ENCODE measurements at regions of chr5 and their contacts with region 1.

Region 1: DNA sequence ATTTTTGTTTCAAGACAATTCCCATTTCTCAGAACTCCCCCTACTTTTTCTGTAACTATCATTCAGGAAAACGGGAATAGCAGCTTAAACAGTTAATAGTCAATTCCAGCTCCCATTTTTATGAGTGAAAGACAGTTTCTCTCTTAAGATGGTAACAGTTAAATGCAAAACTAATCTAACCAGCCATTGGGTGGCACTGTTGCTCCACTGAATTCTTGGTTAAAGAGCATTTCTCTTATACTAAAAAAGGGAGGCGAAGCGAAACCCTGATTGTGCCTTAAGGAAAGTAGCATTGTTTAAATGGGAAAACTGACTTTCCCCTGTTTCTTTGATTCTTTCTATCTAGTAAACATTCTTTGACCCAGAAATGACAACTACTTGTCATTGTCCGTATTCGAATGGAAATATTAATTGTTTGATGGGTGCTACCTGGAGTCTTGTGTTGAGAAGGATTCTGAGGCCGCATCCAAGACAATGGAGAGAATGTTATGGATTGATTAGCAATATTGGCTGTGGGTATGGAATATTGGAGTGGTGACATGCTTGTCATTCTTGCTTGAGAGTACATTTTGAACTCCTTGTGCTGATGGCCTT is 507.8 kb downstream of the MAT2B start:
- DNase-seq: peak; percentile 57 to 68
- H3K4me3 ChIP-seq: no peak overlapping the region
- H3K4me3 Mint-ChIP-seq: no peak overlapping the region
- H3K27ac Mint-ChIP-seq: no peak overlapping the region
- H3K4me1 ChIP-seq: no peaks in the 10 kb centered on the region
- H3K4me1 Mint-ChIP-seq: no peaks in the 10 kb centered on the region
- H3K27me3 ChIP-seq: no peaks in the 10 kb centered on the region
- H3K27me3 Mint-ChIP-seq: peaks cover 3% of the 10 kb centered on the region
- CTCF ChIP-seq: peak; percentile 63 to 69

Region 2: DNA sequence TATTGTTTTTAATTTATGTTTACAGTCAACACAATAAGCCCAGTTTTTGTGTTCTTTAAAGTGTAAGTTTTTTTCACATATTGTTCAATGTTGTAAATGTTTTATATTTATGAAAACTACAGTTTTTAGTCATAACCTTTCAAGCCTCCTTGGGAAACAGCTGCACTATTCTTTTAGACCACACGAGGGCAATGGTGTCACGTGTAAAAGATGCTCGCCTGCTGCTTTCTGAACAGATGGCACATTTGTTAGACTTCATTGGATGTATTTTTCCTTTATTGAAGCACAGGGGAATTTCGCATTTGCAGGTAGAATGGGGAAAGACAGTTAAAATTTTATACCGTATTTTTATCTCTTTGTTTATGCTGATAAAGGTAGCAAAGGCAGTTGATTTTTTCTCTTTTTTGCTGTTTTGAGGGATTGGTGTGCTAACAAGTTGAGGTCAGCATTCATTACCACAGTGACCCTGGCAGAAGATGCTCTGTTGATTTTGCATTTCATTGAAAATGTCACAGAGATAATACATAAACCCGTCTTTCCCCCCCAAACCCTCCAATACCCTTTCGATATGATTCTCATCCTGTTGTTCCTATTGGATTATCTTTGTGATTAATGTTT is 448.7 kb before region 1 on chr5:
- CTCF ChIA-PET with region 1: interaction called, 4 read pairs
- POLR2A ChIA-PET with region 1: no interaction called
- intact Hi-C with region 1: loop called (anchors 2 kb)
- DNase-seq: peak; percentile 48 to 69
- H3K4me3 ChIP-seq: no peak overlapping the region
- H3K4me3 Mint-ChIP-seq: no peak overlapping the region
- H3K27ac Mint-ChIP-seq: no peak overlapping the region
- H3K4me1 ChIP-seq: 0 out of 2 replicates have a peak, but pooled peaks cover 3% of the 10 kb centered on the region
- H3K4me1 Mint-ChIP-seq: peaks cover 8% of the 10 kb centered on the region
- H3K27me3 ChIP-seq: peaks cover 2% of the 10 kb centered on the region; the same call in 1 of the 2 replicates
- H3K27me3 Mint-ChIP-seq: peaks cover 20% of the 10 kb centered on the region
- CTCF ChIP-seq: peak; percentile 82 to 85

Region 3: DNA sequence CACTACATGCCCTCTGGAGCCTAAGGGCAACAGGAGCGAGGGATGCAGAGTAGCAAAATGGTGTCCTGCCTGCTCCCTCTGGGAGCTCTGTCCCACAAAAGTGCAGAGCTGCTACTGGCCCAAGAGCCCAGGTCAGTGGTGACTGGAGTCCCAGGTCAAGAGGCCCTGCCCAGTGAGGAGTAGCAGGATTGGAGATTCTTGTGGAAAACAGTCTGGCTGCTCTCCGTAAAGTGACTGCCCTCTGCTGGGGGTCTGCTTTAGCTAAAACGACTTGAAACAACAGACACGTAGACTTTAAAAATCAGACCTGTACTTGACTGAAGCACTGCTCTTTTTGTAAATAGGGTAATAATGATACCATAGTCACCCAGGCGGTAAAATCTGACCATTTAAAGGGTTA is 409.2 kb after region 1 on chr5:
- CTCF ChIA-PET with region 1: no interaction called
- POLR2A ChIA-PET with region 1: no interaction called
- intact Hi-C with region 1: loop called (anchors 1 kb)
- DNase-seq: peak; percentile 43 to 58
- H3K4me3 ChIP-seq: no peak overlapping the region
- H3K4me3 Mint-ChIP-seq: no peak overlapping the region
- H3K27ac Mint-ChIP-seq: no peak overlapping the region
- H3K4me1 ChIP-seq: no peaks in the 10 kb centered on the region
- H3K4me1 Mint-ChIP-seq: no peaks in the 10 kb centered on the region
- H3K27me3 ChIP-seq: no peaks in the 10 kb centered on the region
- H3K27me3 Mint-ChIP-seq: no peaks in the 10 kb centered on the region
- CTCF ChIP-seq: peak; percentile 31 to 60

Region 4: DNA sequence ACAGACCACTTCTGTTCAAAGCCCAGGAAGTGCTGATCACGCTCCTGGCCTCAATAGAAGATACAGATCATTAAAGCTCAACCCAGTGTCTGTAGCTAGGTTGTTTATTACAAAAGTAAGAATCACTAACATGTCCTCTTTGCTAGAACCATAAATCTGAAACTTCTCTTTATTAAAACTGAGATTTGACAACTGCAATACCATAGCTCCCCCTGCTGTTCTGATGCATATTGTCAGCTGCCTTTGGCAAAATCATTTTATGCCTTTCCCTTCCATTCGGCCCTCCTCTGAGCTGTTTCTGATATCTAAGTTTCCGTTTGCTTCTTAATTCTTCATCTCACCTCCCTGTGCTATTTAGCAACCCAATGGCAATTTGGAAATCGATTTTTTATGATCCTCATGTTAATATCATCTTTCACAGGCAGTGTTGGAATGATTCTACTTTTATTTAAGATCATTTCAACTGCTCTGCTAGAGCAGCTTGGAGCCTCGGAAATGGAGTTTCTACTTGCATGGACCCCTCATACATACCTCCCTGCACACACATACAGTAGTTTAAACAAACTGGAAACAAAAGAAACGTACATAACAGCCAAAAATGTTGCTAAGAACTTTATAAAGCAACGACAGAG is 491.1 kb after region 1 on chr5:
- CTCF ChIA-PET with region 1: interaction called, 9 read pairs
- POLR2A ChIA-PET with region 1: no interaction called
- intact Hi-C with region 1: loop called (anchors 1 kb)
- DNase-seq: peak in 1 of 2 experiments; percentile 56
- H3K4me3 ChIP-seq: no peak overlapping the region
- H3K4me3 Mint-ChIP-seq: no peak overlapping the region
- H3K27ac Mint-ChIP-seq: no peak overlapping the region
- H3K4me1 ChIP-seq: no peaks in the 10 kb centered on the region
- H3K4me1 Mint-ChIP-seq: no peaks in the 10 kb centered on the region
- H3K27me3 ChIP-seq: no peaks in the 10 kb centered on the region
- H3K27me3 Mint-ChIP-seq: peaks cover 4% of the 10 kb centered on the region
- CTCF ChIP-seq: peak; percentile 70 to 79

Region 5: DNA sequence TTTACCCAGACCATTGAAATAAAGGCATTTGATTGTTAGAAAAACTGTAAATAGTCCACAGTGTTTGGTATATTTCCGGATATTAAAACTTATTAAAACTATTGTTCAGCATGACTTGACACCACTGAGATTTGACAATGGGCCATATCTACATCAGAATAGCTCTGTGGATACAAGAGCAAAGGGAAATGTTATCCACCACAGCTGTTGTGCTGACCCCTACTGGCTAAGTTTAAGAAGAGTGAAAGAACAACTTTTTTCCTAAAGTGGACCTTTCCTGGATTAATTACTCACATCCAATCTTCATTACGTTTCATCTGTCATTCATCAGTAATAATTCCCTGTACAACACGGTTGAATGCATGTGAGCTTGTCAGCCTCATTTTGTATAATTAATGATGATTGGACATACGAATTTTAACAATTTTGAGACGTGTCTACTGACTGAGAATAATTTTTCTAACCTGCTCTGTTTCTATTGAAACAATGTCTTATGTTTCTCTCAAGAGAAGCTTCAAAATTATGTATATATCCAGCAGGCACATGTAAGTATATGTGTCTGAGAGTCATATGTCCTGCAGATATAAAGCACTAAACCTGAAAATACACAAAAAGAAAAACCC is 1444.8 kb after region 1 on chr5:
- CTCF ChIA-PET with region 1: no interaction called
- POLR2A ChIA-PET with region 1: no interaction called
- intact Hi-C with region 1: loop called (anchors 5 kb)
- DNase-seq: peak in 1 of 2 experiments; percentile 21
- H3K4me3 ChIP-seq: no peak overlapping the region
- H3K4me3 Mint-ChIP-seq: no peak overlapping the region
- H3K27ac Mint-ChIP-seq: no peak overlapping the region
- H3K4me1 ChIP-seq: no peaks in the 10 kb centered on the region
- H3K4me1 Mint-ChIP-seq: no peaks in the 10 kb centered on the region
- H3K27me3 ChIP-seq: no peaks in the 10 kb centered on the region
- H3K27me3 Mint-ChIP-seq: no peaks in the 10 kb centered on the region
- CTCF ChIP-seq: peak; percentile 44 to 72

Measured in Caco-2 (cell line).